Heart right ventricle (tissue), 16 donors: ENCODE measurements at regions of chr10 and their contacts with region 1.

Region 1: DNA sequence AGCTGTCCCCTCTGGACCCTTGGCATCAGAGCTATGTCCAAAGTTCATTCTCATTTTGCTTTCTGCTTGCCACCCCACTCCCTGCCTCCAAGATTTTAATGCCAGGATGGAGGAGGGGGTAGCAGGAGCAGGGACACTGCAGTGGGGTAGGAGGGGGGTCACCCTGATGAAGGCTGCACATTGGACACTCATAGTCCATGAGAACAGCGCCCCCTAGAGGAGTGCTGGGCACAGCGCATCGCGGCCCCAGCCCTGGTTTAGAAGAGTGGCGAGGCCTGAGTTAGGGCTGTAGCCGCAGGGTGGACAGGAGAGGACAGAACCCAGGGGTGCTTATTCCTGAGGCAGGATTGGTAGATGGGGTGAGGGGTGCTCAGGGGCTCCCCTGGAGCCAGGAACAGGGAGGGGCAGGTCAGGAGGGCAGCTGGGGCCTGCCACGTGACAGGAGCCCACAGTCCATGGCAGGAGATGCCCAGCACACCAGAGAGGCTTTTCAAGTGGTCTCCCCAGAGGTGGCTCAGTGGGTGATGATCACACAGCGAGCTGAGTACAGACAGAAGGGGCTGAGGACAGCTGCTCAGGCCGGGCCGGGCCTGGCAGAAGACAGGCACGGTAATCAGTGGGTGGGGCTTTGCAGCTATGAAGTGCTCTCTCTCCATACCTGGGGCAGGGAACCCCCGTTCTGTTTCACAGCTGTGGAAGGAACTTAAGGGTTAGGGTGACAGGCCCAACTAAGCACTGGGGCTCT is 71.4 kb downstream of the NEURL1 start:
- DNase-seq: no peak
- ATAC-seq: peak in 4 of 8 donors; percentile 16 to 54 (median 42)
- H3K4me3 ChIP-seq: no peak overlapping the region
- H3K27ac ChIP-seq: no peak overlapping the region
- H3K4me1 ChIP-seq: no peaks in the 10 kb centered on the region
- H3K27me3 ChIP-seq: peaks cover 0 to 10% (median 0%) of the 10 kb centered on the region in 7 donors
- CTCF ChIP-seq: peak in 8 of 9 donors; percentile 30 to 68 (median 50)

Region 2: DNA sequence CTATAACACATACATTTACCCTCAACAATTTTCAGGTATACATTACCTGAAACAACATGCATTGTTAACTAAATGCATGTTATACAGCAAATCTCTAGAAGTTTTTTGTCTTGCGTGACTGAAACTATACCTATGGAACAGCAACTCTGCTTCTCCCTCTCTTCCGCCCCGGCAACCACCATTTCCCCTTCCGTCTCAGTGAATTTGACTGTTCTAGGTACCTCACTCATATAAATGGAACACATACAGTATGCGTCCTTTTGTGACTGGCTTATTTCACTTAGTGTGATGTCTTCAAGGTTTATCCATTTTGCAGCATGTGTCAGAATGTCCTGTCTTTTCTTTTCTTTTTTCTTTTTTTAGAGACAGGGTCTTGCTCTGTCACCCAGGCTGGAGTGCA is 135.3 kb before region 1 on chr10:
- intact Hi-C with region 1: loop called in 1 of 10 experiments (anchors 10 kb)
- DNase-seq: no peak
- ATAC-seq: no peak
- H3K4me3 ChIP-seq: no peak overlapping the region
- H3K27ac ChIP-seq: no peak overlapping the region
- H3K4me1 ChIP-seq: peaks cover 0 to 14% (median 0%) of the 10 kb centered on the region in 9 donors
- H3K27me3 ChIP-seq: no peaks in the 10 kb centered on the region
- CTCF ChIP-seq: no peak